ENCODE measurements at regions of chr17 and their contacts with region 1.

Region 1: GRCh38 chr17:82357394-82357793 is 1.7 kb upstream of the TEX19 start:
- DNase-seq: no peak
- ATAC-seq: no peak
- H3K4me3 ChIP-seq: no peak overlapping the region
- H3K27ac ChIP-seq: no peak overlapping the region
- H3K4me1 ChIP-seq: peaks cover 13 to 24% of the 10 kb centered on the region in 2 experiments; a peak in 3 of 4 replicates
- H3K27me3 ChIP-seq: no peaks in the 10 kb centered on the region
- CTCF ChIP-seq: no peak
- POLR2A ChIP-seq: no peak
- RAD21 ChIP-seq: no peak

Region 2: DNA sequence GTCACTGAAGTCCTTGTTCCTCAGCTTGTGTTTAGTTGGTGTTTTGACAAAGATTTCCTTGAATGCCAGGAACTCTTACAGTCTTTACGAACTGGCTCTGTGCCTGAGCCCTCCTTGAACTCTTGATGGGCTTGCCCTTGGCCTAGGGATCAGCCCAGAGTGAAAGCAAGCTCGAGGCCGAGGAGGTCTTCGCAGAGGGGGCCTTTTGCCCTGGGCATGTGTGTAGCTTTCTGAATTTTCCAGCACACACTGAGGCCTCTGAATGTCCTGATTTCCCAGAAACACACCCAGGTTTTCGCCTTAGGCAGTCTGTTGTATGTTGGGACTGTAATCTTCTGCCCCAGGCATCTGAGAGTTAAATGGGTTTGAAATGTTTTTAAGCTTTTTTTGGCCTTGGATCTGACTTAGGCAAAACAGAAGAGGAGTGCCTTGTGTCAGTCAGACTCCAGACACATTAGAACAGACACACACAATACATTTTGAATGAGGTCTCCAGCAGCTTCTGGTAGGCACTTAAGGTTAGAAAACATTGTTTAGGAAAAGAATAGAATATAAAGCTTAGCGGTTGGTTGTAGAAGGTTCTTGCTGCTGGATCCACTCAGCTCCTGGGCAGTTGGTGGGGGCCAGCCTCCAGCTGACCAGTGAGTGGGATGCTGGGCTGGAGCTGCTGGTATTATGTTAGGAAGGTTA is 179.3 kb after region 1 on chr17:
- CTCF ChIA-PET with region 1: no interaction called
- POLR2A ChIA-PET with region 1: no interaction called
- RAD21 ChIA-PET with region 1: interaction called in 1 of 2 experiments, 12 read pairs
- intact Hi-C with region 1: no loop called
- DNase-seq: no peak
- ATAC-seq: no peak; the same call in 1 of the 2 replicates
- H3K4me3 ChIP-seq: no peak overlapping the region
- H3K27ac ChIP-seq: peak overlapping the region; percentile 47
- H3K4me1 ChIP-seq: peaks cover 43 to 58% of the 10 kb centered on the region in 2 experiments
- H3K27me3 ChIP-seq: no peaks in the 10 kb centered on the region
- CTCF ChIP-seq: no peak
- POLR2A ChIP-seq: no peak
- RAD21 ChIP-seq: no peak

Measured in HCT116 (cell line).